GM18951 (cell line): ENCODE measurements at regions of chr6 and their contacts with region 1.

Region 1: DNA sequence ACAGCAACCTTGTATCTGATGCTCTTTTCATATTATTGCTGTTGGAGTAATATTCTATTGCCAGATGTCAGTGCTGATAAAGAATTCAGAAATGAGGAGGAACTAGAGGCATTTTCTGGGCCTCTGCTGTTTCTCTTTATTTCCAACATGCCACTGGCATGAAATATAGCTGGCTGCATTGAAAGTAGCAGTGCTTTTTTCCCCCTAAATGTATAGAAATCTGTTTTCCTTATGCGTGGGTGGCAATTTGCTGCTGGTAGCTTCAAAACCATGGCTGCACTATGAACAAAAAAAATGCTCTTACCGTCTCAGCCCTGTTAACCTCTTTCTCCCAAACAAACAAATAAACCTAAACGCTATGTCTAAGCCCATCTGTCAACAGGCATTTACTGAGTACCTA is 442.3 kb upstream of the AGPAT4 start:
- POLR2A ChIP-seq: no peak

Region 2: GRCh38 chr6:161370880-161371279 is 345.3 kb before region 1 on chr6:
- in situ Hi-C with region 1: no loop called
- POLR2A ChIP-seq: no peak

Region 3: GRCh38 chr6:161418463-161418945 is 297.7 kb before region 1 on chr6:
- in situ Hi-C with region 1: loop called (anchors 25 kb)
- POLR2A ChIP-seq: no peak